MCF 10A (cell line): ENCODE measurements at regions of chr11 and their contacts with region 1.

Region 1: DNA sequence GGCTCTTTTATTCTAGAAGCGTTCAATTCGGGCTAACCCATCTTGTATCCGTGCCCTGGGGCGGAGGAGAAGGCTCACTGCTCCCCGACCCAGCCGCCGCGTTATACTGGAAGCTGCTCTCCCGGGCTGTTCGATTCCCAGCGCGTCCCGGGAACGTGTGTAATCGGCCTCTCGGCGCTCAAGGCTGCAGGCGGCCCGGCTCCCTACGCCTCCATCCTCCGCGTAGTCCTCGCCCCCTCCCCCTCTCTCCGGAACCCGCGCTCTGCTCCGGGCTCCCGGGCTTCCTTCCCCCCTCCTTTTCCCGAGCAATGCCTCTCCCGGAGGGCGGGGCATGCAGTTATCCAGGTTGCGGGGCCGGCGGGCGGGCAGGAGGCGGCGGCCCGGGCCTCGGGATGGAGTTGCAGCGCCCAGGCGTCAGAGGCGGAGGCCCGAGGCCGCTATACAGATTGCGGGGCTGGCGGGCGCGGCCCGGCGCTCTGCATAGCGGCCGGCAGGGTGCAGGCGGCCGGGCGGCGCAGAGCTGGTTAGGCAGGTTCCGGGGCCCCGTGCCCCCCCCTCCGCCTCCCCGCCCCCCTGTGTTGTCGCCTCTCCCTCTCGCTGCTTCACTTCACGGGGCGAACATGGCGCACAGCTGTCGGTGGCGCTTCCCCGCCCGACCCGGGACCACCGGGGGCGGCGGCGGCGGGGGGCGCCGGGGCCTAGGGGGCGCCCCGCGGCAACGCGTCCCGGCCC is at the start of gene KMT2A:
- DNase-seq: peak; percentile 96
- H3K4me3 Mint-ChIP-seq: peak within 1 kb of the TSS; percentile 96
- H3K27ac Mint-ChIP-seq: peak within 1 kb of the TSS; percentile 71
- H3K4me1 Mint-ChIP-seq: peaks cover 37% of the 10 kb centered on the region
- H3K27me3 Mint-ChIP-seq: no peaks in the 10 kb centered on the region
- CTCF ChIP-seq: no peak
- total RNA-seq, gene KMT2A: 52.0 and 62.9 TPM in 2 replicates

Region 2: DNA sequence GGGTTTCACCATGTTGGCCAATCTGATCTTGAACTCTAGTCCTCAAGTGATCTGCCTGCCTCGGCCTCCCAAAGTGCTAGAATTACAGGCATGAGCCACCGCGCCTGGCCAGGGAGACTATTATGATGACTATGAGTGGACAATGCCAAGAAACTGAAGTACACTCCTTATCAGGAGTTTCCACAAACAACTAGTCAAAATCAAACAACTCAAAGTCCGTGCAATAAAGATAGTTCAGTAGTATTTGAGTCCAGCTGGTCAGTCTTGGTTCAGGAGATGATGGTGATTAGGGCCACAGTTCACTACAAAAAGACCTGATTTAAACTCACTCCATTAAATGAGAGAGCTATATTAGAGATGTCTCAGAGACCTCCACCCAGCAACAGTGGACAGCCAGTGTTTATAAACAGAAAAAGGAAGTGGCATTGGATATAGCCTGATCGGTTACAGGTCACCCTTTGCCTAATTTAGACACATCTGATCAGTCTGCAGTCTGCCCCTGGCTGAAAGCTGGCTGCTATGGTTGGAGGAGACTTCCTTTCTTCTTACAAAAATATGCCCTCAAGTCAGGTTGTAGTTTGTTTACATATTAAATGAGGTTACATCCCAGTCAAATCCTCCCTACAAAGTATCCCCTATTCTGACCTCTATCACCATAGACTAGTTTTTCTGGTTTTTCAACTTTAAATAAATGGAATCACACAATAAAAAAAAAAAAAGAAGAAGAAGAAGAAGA is 114.5 kb before region 1 on chr11:
- CTCF ChIA-PET with region 1: no interaction called
- POLR2A ChIA-PET with region 1: no interaction called
- intact Hi-C with region 1: no loop called
- DNase-seq: no peak
- H3K4me3 Mint-ChIP-seq: no peak overlapping the region
- H3K27ac Mint-ChIP-seq: no peak overlapping the region
- H3K4me1 Mint-ChIP-seq: peaks cover 6% of the 10 kb centered on the region
- H3K27me3 Mint-ChIP-seq: no peaks in the 10 kb centered on the region
- CTCF ChIP-seq: no peak

Region 3: GRCh38 chr11:118401151-118401878 is 34.7 kb before region 1 on chr11 and contains the start of gene ATP5MG:
- CTCF ChIA-PET with region 1: interaction called, 6 read pairs
- POLR2A ChIA-PET with region 1: interaction called, 78 read pairs
- intact Hi-C with region 1: loop called (anchors 1 kb)
- DNase-seq: peak; percentile 92
- H3K4me3 Mint-ChIP-seq: peak within 1 kb of the TSS; percentile 81
- H3K27ac Mint-ChIP-seq: peak within 1 kb of the TSS; percentile 93
- H3K4me1 Mint-ChIP-seq: peaks cover 35% of the 10 kb centered on the region
- H3K27me3 Mint-ChIP-seq: no peaks in the 10 kb centered on the region
- CTCF ChIP-seq: no peak
- total RNA-seq, gene ATP5MG: 197 and 210 TPM in 2 replicates

Region 4: DNA sequence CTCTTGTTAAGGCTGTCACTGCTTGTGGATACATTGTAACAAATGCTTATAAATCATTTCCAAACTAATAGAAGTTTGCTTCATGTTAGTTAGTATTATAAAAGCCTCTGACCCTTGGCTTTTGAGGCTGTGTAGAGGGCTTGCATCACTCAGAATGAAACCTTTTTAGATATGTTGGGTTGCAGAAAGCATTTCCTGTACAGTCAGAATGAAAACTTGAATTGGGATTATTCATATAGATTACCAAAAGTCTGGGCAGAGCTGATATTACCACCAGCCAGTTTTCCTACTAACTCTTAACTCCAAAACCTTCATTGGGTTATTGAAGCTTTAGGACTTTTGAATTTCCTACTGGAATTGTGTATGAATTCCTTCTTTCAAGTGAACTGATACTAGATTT is 12.2 kb after region 1 on chr11:
- CTCF ChIA-PET with region 1: interaction called, 3 read pairs
- POLR2A ChIA-PET with region 1: interaction called, 10 read pairs
- intact Hi-C with region 1: no loop called
- DNase-seq: no peak
- H3K4me3 Mint-ChIP-seq: no peak overlapping the region
- H3K27ac Mint-ChIP-seq: no peak overlapping the region
- H3K4me1 Mint-ChIP-seq: peaks cover 29% of the 10 kb centered on the region
- H3K27me3 Mint-ChIP-seq: no peaks in the 10 kb centered on the region
- CTCF ChIP-seq: no peak

Region 5: DNA sequence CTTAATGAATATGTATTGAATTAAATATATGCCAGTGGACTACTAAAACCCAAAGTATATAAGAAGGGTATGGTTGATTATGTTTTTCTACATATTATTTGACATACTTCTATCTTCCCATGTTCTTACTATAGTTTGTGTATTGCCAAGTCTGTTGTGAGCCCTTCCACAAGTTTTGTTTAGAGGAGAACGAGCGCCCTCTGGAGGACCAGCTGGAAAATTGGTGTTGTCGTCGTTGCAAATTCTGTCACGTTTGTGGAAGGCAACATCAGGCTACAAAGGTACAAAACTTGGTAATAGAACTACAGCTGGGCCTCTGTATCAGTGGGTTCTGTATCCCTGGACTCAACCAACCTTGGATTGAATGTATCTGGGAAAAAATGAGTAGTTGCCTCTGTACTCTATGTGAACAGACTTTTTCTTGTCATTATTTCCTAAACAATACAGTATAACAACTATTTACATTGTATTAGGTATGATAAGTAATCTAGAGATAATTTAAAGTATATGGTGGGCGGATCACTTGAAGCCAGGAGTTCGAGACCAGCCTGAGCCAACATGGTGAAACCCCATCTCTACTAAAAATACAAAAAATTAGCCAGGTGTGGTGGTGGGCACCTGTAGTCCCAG is 52.5 kb after region 1 on chr11:
- CTCF ChIA-PET with region 1: interaction called, 3 read pairs
- POLR2A ChIA-PET with region 1: interaction called, 3 read pairs
- intact Hi-C with region 1: loop called (anchors 2 kb)
- DNase-seq: peak; percentile 78
- H3K4me3 Mint-ChIP-seq: no peak overlapping the region
- H3K27ac Mint-ChIP-seq: no peak overlapping the region
- H3K4me1 Mint-ChIP-seq: no peaks in the 10 kb centered on the region
- H3K27me3 Mint-ChIP-seq: no peaks in the 10 kb centered on the region
- CTCF ChIP-seq: peak; percentile 74